Cardiac septum (tissue), 1 donor: ENCODE measurements at regions of chr5 and their contacts with region 1.

Region 1: GRCh38 chr5:141389153-141390042 is 1.9 kb downstream of the PCDHGB4 start:
- DNase-seq: no peak

Region 2: DNA sequence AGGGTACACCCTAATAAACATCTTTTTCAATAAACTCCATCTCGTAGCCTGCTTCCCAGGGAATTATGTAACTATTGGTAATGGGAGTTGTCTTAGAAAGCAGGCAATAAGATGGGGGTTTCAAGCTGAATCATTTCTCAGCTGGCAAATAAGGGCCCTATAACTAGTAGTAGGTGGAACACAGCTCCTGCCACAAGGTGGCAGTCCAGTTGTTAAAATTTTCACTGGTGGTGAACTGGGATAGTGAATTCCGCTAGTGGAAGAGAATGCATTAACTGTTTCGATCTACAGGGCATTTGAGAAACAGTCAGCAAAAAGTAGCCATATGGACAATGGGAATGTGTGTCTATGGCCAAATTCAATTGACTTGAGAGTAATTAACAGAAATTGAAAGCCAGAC is 116.5 kb before region 1 on chr5:
- intact Hi-C with region 1: no loop called
- DNase-seq: no peak

Region 3: GRCh38 chr5:141369994-141370848 is 19.2 kb before region 1 on chr5 and contains the start of gene PCDHGB3:
- intact Hi-C with region 1: loop called (anchors 2 kb)
- DNase-seq: peak; percentile 74
- total RNA-seq, gene PCDHGB3: 14.2 TPM